ENCODE measurements at regions of chrX and their contacts with region 1.

Region 1: GRCh38 chrX:9464435-9465371 is at the start of gene TBL1X:
- DNase-seq: peak in 8 of 9 experiments; percentile 25 to 67 (median 51)
- ATAC-seq: peak; percentile 34
- H3K4me3 ChIP-seq: peak within 1 kb of the TSS; percentile 60 to 70
- H3K4me3 Mint-ChIP-seq: peak within 1 kb of the TSS; percentile 83
- H3K27ac ChIP-seq: peak within 1 kb of the TSS in 1 of 2 experiments; percentile 63
- H3K27ac Mint-ChIP-seq: peak within 1 kb of the TSS; percentile 93
- H3K4me1 ChIP-seq: peaks cover 36% of the 10 kb centered on the region
- H3K4me1 Mint-ChIP-seq: peaks cover 44% of the 10 kb centered on the region
- H3K27me3 ChIP-seq: no peaks in the 10 kb centered on the region
- H3K27me3 Mint-ChIP-seq: no peaks in the 10 kb centered on the region
- CTCF ChIP-seq: no peak
- total RNA-seq, gene TBL1X: 18.0 to 19.3 TPM

Region 2: DNA sequence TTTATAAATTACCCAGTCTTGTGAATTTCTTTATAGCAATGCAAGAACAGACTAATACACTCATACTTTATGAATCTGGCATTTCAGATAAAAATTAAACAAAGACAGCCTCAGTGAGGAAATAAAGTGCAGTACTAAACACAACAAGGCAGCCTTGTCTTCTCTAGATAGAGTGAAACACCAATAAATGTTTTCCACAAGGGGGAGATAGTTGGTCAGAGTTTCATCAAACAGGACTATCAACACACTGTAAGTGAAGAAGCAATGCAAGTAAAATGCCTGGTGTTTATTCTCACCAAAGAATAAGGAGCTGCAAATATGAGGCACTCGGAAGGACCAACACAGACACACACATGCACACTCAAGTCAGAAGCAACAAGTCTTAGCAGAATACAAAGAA is 493.6 kb before region 1 on chrX:
- CTCF ChIA-PET with region 1: interaction called, 3 read pairs
- POLR2A ChIA-PET with region 1: no interaction called
- intact Hi-C with region 1: loop called in 1 of 2 experiments (anchors 5 kb)
- DNase-seq: peak in 2 of 9 experiments; percentile 51 to 67
- ATAC-seq: peak; percentile 57
- H3K4me3 ChIP-seq: no peak overlapping the region
- H3K4me3 Mint-ChIP-seq: no peak overlapping the region
- H3K27ac ChIP-seq: no peak overlapping the region
- H3K27ac Mint-ChIP-seq: no peak overlapping the region
- H3K4me1 ChIP-seq: no peaks in the 10 kb centered on the region
- H3K4me1 Mint-ChIP-seq: peaks cover 2% of the 10 kb centered on the region
- H3K27me3 ChIP-seq: no peaks in the 10 kb centered on the region
- H3K27me3 Mint-ChIP-seq: no peaks in the 10 kb centered on the region
- CTCF ChIP-seq: peak; percentile 43

Region 3: DNA sequence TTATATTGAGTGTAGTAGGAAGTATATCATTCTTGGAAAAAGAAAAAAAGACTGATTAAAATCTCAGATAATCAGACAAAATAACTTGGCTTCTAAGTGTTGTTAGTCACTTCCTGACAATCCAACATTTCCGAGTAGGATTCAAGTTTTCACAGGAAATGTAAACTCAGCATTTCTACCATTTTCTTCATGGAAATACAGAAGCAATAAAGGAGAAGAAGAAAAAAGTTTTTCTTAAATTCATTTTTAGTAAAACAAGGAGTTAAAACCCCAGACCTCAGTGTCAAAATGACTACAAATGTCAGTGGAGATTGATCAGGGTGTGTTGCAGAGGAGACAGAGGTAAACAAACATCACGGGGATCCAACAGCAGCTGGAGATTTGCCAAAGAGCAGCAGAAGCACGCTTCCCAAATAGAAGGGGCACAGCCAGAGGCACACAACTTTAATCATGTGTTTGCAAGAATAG is 301.5 kb before region 1 on chrX:
- CTCF ChIA-PET with region 1: no interaction called
- POLR2A ChIA-PET with region 1: no interaction called
- intact Hi-C with region 1: loop called (anchors 2 to 5 kb)
- DNase-seq: no peak
- ATAC-seq: no peak
- H3K4me3 ChIP-seq: no peak overlapping the region
- H3K4me3 Mint-ChIP-seq: no peak overlapping the region
- H3K27ac ChIP-seq: no peak overlapping the region
- H3K27ac Mint-ChIP-seq: no peak overlapping the region
- H3K4me1 ChIP-seq: peaks cover 17% of the 10 kb centered on the region
- H3K4me1 Mint-ChIP-seq: peaks cover 28% of the 10 kb centered on the region
- H3K27me3 ChIP-seq: no peaks in the 10 kb centered on the region
- H3K27me3 Mint-ChIP-seq: no peaks in the 10 kb centered on the region
- CTCF ChIP-seq: no peak

Region 4: DNA sequence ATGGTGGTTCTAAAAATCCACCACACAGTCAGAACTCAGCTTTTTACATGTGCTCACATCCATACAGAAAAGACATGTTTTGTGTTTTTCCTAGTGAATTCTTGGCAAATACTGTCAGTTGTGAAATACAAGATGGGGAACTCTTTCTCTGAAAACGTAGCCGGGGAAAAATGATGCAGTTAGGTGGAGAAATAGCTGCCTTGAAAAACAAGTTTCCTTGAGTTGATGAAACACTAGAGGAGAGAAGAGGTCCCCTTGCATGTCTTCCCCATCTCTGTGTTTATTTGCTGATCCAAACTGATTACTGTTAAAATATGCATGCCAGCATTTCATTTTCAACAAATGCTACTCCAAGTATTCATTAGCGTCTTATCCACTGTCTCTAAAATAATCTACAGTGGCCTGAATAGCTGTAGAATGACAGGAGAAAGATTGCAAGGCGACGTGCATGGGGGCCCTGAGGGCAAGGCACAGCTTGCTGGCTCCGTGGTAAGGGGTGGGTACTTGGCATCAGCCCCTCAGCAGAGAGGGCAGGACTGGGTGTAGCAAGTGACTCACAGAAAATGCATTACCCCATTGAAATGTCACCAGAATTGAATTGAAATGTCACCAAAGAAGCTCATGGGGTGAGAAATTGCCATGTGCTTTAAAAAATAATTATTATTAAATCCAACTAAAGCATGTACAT is 47.9 kb before region 1 on chrX:
- CTCF ChIA-PET with region 1: no interaction called
- POLR2A ChIA-PET with region 1: no interaction called
- intact Hi-C with region 1: loop called in 1 of 2 experiments (anchors 5 kb)
- DNase-seq: no peak
- ATAC-seq: no peak
- H3K4me3 ChIP-seq: no peak overlapping the region
- H3K4me3 Mint-ChIP-seq: no peak overlapping the region
- H3K27ac ChIP-seq: no peak overlapping the region
- H3K27ac Mint-ChIP-seq: no peak overlapping the region
- H3K4me1 ChIP-seq: peaks cover 7% of the 10 kb centered on the region
- H3K4me1 Mint-ChIP-seq: peaks cover 12% of the 10 kb centered on the region
- H3K27me3 ChIP-seq: no peaks in the 10 kb centered on the region
- H3K27me3 Mint-ChIP-seq: no peaks in the 10 kb centered on the region
- CTCF ChIP-seq: no peak

Region 5: GRCh38 chrX:9644335-9644734 is 179.6 kb after region 1 on chrX:
- CTCF ChIA-PET with region 1: no interaction called
- POLR2A ChIA-PET with region 1: no interaction called
- intact Hi-C with region 1: loop called in 1 of 2 experiments (anchors 10 kb)
- DNase-seq: peak in 7 of 9 experiments; percentile 1 to 85 (median 45)
- ATAC-seq: peak; percentile 90
- H3K4me3 ChIP-seq: no peak overlapping the region
- H3K4me3 Mint-ChIP-seq: no peak overlapping the region
- H3K27ac ChIP-seq: no peak overlapping the region
- H3K27ac Mint-ChIP-seq: peak overlapping the region; percentile 55
- H3K4me1 ChIP-seq: peaks cover 26% of the 10 kb centered on the region
- H3K4me1 Mint-ChIP-seq: peaks cover 28% of the 10 kb centered on the region
- H3K27me3 ChIP-seq: no peaks in the 10 kb centered on the region
- H3K27me3 Mint-ChIP-seq: no peaks in the 10 kb centered on the region
- CTCF ChIP-seq: no peak